Activated CD4-positive, alpha-beta T cell treated with anti-CD3 and anti-CD28 coated beads for 36 hours (primary cell): ENCODE measurements at regions of chr6 and their contacts with region 1.

Region 1: DNA sequence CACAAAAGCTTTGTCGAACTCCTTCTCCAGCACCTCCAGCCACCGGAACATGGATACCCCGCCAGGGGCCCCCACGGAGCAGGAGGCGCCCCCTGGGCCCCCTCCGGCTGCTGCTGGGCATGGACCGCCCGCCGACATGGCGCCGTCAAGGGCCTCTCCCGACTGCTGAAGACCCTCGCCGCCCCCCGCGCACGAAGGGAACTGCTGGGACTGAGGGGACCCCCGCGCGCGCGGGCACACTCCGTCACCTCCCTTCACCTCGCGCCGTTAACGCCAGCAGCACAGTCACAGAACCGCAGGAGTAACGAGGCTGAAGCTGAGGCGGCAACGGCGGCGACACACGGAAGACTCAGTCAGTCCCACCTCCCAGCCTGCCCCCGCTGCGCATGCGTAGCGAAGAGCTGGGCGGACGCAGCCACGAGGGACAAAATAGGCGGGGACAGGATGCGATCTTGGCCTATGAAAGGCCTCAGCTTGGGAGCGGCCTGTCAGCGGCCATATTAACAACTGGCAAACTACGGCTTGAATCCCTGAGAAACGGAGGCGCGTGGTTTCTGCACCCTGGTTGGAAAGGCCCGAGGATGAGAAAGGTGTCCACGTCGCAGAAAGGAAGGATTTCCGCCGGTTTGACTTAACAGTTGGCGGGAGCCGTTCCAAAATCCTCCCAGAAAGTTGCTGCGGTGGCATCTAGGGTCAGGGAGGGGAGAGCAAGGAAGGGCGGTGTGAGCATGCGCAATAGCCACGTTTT is at the start of gene GOPC:
- DNase-seq: peak; percentile 96
- ATAC-seq: peak; percentile 94
- H3K4me3 Mint-ChIP-seq: peak within 1 kb of the TSS; percentile 99
- H3K27ac Mint-ChIP-seq: peak within 1 kb of the TSS; percentile 99
- H3K4me1 Mint-ChIP-seq: peaks cover 30% of the 10 kb centered on the region
- H3K27me3 Mint-ChIP-seq: peaks cover 2% of the 10 kb centered on the region
- total RNA-seq, gene GOPC: 13.3 to 15.5 TPM

Region 2: GRCh38 chr6:116667623-116668022 is 934.7 kb before region 1 on chr6:
- CTCF ChIA-PET with region 1: no interaction called
- POLR2A ChIA-PET with region 1: no interaction called
- intact Hi-C with region 1: loop called in 1 of 2 experiments (anchors 5 kb)
- DNase-seq: no peak
- ATAC-seq: no peak
- H3K4me3 Mint-ChIP-seq: peak overlapping the region; percentile 89
- H3K27ac Mint-ChIP-seq: peak overlapping the region; percentile 96
- H3K4me1 Mint-ChIP-seq: peaks cover 38% of the 10 kb centered on the region
- H3K27me3 Mint-ChIP-seq: no peaks in the 10 kb centered on the region

Region 3: GRCh38 chr6:117482240-117483003 is 119.9 kb before region 1 on chr6 and contains the start of gene DCBLD1:
- CTCF ChIA-PET with region 1: interaction called, 7 read pairs
- POLR2A ChIA-PET with region 1: interaction called, 3 read pairs
- intact Hi-C with region 1: loop called (anchors 1 kb)
- DNase-seq: peak; percentile 72
- ATAC-seq: peak; percentile 86
- H3K4me3 Mint-ChIP-seq: peak within 1 kb of the TSS; percentile 75
- H3K27ac Mint-ChIP-seq: peak within 1 kb of the TSS; percentile 27
- H3K4me1 Mint-ChIP-seq: peaks cover 15% of the 10 kb centered on the region
- H3K27me3 Mint-ChIP-seq: peaks cover 50% of the 10 kb centered on the region
- total RNA-seq, gene DCBLD1: 1.2 to 1.6 TPM

Region 4: GRCh38 chr6:117568831-117569410 is 33.4 kb before region 1 on chr6:
- CTCF ChIA-PET with region 1: interaction called, 3 read pairs
- POLR2A ChIA-PET with region 1: interaction called, 3 read pairs
- intact Hi-C with region 1: loop called in 1 of 2 experiments (anchors 1 kb)
- DNase-seq: no peak
- ATAC-seq: peak; percentile 96
- H3K4me3 Mint-ChIP-seq: no peak overlapping the region
- H3K27ac Mint-ChIP-seq: no peak overlapping the region
- H3K4me1 Mint-ChIP-seq: peaks cover 14% of the 10 kb centered on the region
- H3K27me3 Mint-ChIP-seq: no peaks in the 10 kb centered on the region

Region 5: DNA sequence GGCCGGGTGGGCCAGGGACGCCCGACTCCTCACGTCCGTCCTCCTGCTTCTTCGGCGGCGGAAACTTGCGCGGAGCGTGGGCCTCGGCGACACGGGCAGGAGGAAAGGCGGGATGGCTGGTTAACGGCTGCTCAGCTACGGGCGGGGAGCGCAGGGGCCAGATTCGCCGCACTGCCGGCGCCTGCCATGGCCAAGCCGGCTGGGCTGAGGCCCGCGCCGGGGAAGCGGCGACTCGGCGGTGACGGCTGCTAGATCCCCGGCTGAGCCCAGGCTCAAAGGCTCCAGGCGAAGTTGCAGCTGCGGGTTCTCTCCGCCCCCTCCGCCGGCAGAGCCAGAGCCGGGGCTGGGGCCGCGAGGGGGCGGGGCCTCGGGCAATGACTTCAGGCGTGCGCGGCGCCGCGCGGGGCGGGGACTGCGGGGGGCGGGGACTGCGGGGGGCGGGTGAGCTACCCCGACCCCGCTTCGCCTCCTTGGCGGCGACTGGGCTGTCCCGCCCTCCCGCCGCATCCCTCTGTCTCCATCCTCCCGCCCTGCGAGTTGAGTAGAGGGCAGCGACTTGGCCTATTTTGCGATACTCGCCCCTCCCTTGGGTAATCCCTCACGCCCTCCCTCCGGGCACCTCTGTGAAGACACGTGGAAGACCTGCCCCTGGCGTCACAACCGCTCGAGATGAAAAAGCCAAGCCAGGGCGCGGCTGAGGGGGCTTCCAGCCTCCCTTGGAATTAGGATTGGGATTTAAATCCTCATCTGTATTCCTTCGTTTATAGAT is 1049.1 kb after region 1 on chr6 and contains the start of gene CEP85L:
- CTCF ChIA-PET with region 1: no interaction called
- POLR2A ChIA-PET with region 1: no interaction called
- intact Hi-C with region 1: loop called in 1 of 2 experiments (anchors 1 kb)
- DNase-seq: peak; percentile 96
- ATAC-seq: peak; percentile 93
- H3K4me3 Mint-ChIP-seq: peak within 1 kb of the TSS; percentile 85
- H3K27ac Mint-ChIP-seq: peak within 1 kb of the TSS; percentile 94
- H3K4me1 Mint-ChIP-seq: peaks cover 50% of the 10 kb centered on the region
- H3K27me3 Mint-ChIP-seq: no peaks in the 10 kb centered on the region
- total RNA-seq, gene CEP85L: 29.5 to 29.7 TPM